ENCODE measurements at regions of chr17 and their contacts with region 1.

Region 1: GRCh38 chr17:76397687-76398487 is 13.5 kb downstream of the SPHK1 start:
- DNase-seq: peak; percentile 73 to 76 (median 74)
- H3K4me3 ChIP-seq: no peak overlapping the region
- H3K4me3 Mint-ChIP-seq: no peak overlapping the region
- H3K27ac ChIP-seq: no peak overlapping the region
- H3K27ac Mint-ChIP-seq: peak overlapping the region in 4 of 7 donors; percentile 5 to 82 (median 51)
- H3K4me1 ChIP-seq: no peaks in the 10 kb centered on the region
- H3K4me1 Mint-ChIP-seq: peaks cover 0 to 4% (median 2%) of the 10 kb centered on the region in 4 donors
- H3K27me3 ChIP-seq: no peaks in the 10 kb centered on the region
- H3K27me3 Mint-ChIP-seq: no peaks in the 10 kb centered on the region

Region 2: GRCh38 chr17:76296186-76296585 is 101.7 kb before region 1 on chr17:
- CTCF ChIA-PET with region 1: interaction called, 225 read pairs
- POLR2A ChIA-PET with region 1: no interaction called
- intact Hi-C with region 1: no loop called
- DNase-seq: no peak
- H3K4me3 ChIP-seq: no peak overlapping the region
- H3K4me3 Mint-ChIP-seq: no peak overlapping the region
- H3K27ac ChIP-seq: no peak overlapping the region
- H3K27ac Mint-ChIP-seq: peak overlapping the region in 1 of 7 donors; percentile 46
- H3K4me1 ChIP-seq: no peaks in the 10 kb centered on the region
- H3K4me1 Mint-ChIP-seq: peaks cover 0 to 2% (median under 1%) of the 10 kb centered on the region in 4 donors
- H3K27me3 ChIP-seq: no peaks in the 10 kb centered on the region
- H3K27me3 Mint-ChIP-seq: no peaks in the 10 kb centered on the region

Region 3: DNA sequence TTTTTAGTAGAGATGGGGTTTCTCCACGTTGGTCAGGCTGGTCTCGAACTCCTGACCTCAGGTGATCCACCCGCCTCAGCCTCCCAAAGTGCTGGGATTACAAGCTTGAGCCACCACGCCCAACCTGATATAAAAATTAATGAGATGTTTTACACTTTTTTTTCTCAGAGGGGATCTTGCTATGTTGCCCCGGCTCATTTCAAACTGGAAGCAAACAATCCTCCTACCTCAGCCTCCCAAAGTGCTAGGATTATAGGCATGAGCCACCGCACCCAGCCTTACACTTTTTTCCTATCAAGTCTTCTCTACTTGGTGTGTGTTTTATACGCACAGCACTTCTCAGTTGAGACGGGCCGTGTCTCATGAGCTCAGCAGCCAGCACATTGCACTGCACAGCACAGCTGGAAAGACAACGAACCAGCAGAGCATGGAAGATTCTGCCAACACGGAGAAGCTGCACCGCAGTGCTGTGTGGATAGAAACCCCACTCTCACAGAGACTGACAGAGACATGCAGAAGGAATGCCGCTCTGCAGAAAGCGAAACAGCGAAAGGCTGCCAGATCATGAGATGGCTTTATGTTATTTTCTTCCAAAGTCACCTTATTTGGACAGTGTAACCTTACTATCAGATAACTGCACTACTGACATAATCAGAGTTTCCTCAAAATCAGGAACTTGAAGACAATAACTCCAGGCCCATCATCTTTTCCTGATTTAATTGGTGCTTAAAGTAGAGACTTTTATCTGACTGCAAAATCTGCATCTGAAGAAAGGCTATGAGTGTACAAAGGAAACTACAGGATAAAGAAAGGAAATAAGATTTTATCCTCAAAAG is 83.3 kb before region 1 on chr17:
- CTCF ChIA-PET with region 1: interaction called, 225 read pairs
- POLR2A ChIA-PET with region 1: no interaction called
- intact Hi-C with region 1: no loop called
- DNase-seq: no peak
- H3K4me3 ChIP-seq: no peak overlapping the region
- H3K4me3 Mint-ChIP-seq: peak overlapping the region in 4 of 8 donors; percentile 11 to 30 (median 26)
- H3K27ac ChIP-seq: no peak overlapping the region
- H3K27ac Mint-ChIP-seq: peak overlapping the region in 6 of 7 donors; percentile 38 to 73 (median 50)
- H3K4me1 ChIP-seq: no peaks in the 10 kb centered on the region
- H3K4me1 Mint-ChIP-seq: peaks cover 8 to 11% (median 11%) of the 10 kb centered on the region in 4 donors
- H3K27me3 ChIP-seq: no peaks in the 10 kb centered on the region
- H3K27me3 Mint-ChIP-seq: no peaks in the 10 kb centered on the region

Region 4: DNA sequence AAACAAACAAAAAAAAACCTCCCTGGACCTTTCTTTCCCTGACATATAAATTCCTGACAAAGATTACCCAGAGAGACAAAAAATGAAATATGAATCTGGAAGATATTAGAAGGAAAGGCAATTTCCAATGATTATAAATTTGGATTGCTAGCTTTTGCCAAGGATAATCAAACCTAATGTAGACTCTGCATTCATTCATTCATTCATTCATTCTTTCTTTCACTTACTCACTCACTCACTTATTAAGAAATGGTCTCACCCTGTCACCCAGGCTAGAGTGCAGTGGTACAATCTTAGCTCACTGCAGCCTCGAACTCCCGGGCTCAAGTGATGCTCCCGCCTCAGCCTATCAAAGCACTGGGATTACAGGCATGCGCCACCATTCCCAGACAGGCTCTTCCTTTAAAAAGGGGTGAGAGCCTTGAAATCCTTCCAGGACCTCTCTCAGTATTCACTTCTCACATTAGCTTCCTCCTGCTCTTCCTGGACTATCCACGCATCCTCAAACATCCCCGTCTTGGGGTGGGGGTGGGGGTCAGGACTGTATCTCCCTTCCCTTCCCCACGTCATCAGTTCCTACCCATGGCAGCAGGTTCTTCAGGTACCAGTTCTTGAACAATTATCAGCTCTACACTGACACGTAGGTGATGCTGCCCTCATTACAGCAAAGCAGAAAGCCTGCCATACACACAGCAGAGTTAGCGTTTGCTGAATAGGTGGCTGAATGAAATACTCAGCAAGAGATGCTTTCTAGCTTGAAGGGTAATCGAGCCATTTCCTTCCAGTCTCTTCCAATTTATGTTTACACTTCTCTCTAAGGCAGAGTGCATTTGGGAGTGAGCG is 64.0 kb before region 1 on chr17:
- CTCF ChIA-PET with region 1: interaction called, 14 read pairs
- POLR2A ChIA-PET with region 1: no interaction called
- intact Hi-C with region 1: no loop called
- DNase-seq: no peak
- H3K4me3 ChIP-seq: no peak overlapping the region
- H3K4me3 Mint-ChIP-seq: no peak overlapping the region
- H3K27ac ChIP-seq: no peak overlapping the region
- H3K27ac Mint-ChIP-seq: peak overlapping the region in 3 of 7 donors; percentile 11 to 44 (median 38)
- H3K4me1 ChIP-seq: no peaks in the 10 kb centered on the region
- H3K4me1 Mint-ChIP-seq: peaks cover 0 to 5% (median 4%) of the 10 kb centered on the region in 4 donors
- H3K27me3 ChIP-seq: no peaks in the 10 kb centered on the region
- H3K27me3 Mint-ChIP-seq: no peaks in the 10 kb centered on the region

Region 5: DNA sequence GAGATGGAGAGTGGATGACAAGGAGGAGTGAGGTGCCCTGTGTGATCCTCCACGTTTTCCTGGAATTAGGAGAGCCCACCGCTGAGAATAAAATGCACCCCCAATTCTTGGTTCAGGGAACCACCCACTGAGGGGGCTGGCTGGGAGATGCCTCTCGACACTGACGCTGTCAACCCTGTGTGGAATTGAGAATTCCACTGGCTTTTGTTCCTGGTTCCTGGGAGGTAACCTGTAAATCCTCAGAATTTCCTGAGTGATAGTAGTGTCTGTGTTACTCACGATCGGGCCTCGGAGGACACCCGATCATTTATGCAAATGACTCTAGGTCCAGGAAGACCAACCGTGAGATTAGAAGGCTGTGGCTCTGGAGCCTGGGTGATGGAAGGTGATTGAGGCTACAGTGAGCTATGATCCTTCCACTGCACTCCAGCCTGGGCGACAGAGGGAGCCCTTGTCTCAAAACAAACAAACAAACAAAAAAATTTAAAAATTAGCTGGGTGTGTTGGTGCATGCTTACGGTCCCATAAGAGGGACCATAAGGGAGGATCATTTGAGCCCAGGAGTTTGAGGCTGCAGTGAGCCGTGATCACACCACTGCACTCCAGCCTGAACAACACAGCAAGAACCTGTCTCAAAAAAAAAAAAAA is 32.5 kb before region 1 on chr17:
- CTCF ChIA-PET with region 1: interaction called, 18 read pairs
- POLR2A ChIA-PET with region 1: no interaction called
- intact Hi-C with region 1: no loop called
- DNase-seq: no peak
- H3K4me3 ChIP-seq: no peak overlapping the region
- H3K4me3 Mint-ChIP-seq: no peak overlapping the region
- H3K27ac ChIP-seq: no peak overlapping the region
- H3K27ac Mint-ChIP-seq: no peak overlapping the region
- H3K4me1 ChIP-seq: no peaks in the 10 kb centered on the region
- H3K4me1 Mint-ChIP-seq: no peaks in the 10 kb centered on the region
- H3K27me3 ChIP-seq: no peaks in the 10 kb centered on the region
- H3K27me3 Mint-ChIP-seq: peaks cover 0 to 1% of the 10 kb centered on the region in 2 donors

Region 6: DNA sequence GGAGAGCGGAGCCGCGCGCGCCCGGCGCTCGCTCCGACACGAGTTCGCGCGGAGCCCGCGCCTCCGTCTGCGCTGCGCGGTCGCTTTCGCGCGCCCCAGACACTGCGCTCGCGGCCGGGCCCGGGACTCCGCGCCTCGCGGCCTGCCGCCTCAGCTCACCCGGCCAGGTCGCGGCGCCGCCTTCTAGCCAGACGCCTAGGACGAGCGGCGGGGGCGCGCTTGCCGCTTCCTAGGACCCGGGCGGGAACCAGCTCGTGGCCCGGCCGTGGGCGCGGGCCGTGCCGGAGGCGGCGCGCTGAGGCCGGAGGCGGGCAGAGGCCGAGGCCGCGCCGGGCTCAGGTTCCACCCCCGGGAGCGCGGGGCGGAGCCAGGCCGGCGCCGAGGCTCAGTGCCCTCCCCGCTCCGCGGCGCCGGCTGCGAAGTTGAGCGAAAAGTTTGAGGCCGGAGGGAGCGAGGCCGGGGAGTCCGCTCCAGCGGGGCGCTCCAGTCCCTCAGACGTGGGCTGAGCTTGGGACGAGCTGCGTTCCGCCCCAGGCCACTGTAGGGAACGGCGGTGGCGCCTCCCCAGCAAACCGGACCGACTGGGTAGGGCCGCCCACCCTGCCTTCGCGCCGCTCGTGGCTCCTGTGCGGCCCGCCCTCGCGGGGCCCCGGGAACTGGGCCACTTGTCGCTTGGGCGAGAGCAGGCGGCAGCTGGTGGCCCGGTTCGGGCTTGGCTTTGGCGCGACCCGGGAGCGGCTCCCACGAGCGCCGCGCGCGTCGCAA is 13.5 kb before region 1 on chr17 and contains the start of gene SPHK1:
- CTCF ChIA-PET with region 1: interaction called, 73 read pairs
- POLR2A ChIA-PET with region 1: interaction called, 18 read pairs
- intact Hi-C with region 1: no loop called
- DNase-seq: peak in 4 of 5 donors; percentile 38 to 60 (median 50)
- H3K4me3 ChIP-seq: peak within 1 kb of the TSS; percentile 42 to 64
- H3K4me3 Mint-ChIP-seq: peak within 1 kb of the TSS; percentile 86 to 95 (median 90)
- H3K27ac ChIP-seq: no peak within 1 kb of the TSS
- H3K27ac Mint-ChIP-seq: peak within 1 kb of the TSS; percentile 39 to 92 (median 72)
- H3K4me1 ChIP-seq: peaks cover 20% of the 10 kb centered on the region
- H3K4me1 Mint-ChIP-seq: peaks cover 0 to 6% (median 4%) of the 10 kb centered on the region in 4 donors
- H3K27me3 ChIP-seq: no peaks in the 10 kb centered on the region
- H3K27me3 Mint-ChIP-seq: no peaks in the 10 kb centered on the region
- total RNA-seq, gene SPHK1: 0.67 to 0.70 TPM

Region 7: DNA sequence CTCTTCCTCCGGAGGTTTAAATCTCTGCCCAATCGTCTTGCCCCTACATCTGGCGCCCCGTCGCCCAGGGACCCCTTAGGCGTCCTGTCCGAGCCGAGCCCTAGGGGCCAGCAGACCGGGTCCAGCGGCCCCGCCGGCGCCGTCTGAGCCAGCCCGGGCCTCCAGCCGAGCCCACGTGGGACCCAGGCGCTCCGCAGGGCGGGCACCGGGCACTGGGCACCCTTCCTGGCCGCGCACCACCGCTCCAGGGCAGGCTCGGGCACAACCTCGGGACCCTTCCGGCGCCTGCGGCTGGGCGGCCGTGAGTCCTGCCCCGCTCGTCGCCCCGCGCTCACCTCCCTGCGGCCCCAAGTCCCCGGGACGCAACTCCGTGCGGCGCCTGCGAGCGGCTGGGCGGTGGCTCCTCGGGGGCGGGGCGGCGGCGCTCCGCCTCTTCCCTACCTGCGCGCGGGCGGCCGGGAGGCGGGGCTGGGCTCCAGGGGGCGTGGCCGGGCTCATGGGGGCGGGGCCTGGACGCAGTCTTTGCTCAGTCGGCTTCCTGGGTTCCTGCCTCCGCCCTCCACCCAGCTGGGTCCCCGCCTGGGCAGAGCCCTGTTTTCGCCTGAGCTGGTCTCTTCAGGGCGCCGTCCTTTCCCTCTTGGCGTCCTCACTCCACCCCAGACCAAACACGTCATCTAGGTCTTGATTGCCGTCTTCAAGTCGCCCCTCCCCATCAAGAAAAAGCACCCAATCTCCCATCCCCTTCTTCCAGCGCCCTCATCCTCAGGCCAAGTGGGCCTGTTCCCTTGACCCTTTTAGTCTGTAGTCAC is 103.3 kb after region 1 on chr17 and contains the start of gene RHBDF2:
- CTCF ChIA-PET with region 1: interaction called, 19 read pairs
- POLR2A ChIA-PET with region 1: no interaction called
- intact Hi-C with region 1: no loop called
- DNase-seq: peak; percentile 92 to 98 (median 95)
- H3K4me3 ChIP-seq: peak within 1 kb of the TSS; percentile 61 to 83
- H3K4me3 Mint-ChIP-seq: peak within 1 kb of the TSS; percentile 86 to 91 (median 89)
- H3K27ac ChIP-seq: peak within 1 kb of the TSS; percentile 69
- H3K27ac Mint-ChIP-seq: peak within 1 kb of the TSS; percentile 85 to 100 (median 98)
- H3K4me1 ChIP-seq: peaks cover 41% of the 10 kb centered on the region
- H3K4me1 Mint-ChIP-seq: peaks cover 15 to 56% (median 40%) of the 10 kb centered on the region in 4 donors
- H3K27me3 ChIP-seq: no peaks in the 10 kb centered on the region
- H3K27me3 Mint-ChIP-seq: no peaks in the 10 kb centered on the region
- total RNA-seq, gene RHBDF2: 50.0 to 62.2 TPM

Measured in CD4-positive, alpha-beta memory T cell (primary cell).